ENCODE measurements at regions of chr10 and their contacts with region 1.

Region 1: DNA sequence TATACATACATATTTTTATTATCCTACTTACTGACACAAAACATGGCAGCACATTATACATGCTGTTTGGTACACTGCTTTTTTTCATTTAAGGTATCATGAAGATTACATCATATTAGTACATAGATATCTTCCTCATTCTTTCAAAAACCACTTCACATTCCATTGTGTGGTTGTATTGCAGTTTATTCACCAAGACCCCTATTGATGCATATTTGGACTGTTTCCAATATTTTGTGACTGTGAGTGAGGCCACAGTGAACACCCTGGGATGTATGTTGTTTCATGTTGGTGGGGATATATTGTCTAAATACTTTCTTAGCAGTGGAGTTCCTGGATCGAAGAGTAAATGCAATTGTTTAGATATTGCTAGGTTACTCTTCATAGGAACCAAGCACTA is 39.0 kb downstream of the TFAM start:
- DNase-seq: no peak
- ATAC-seq: no peak
- H3K4me3 ChIP-seq: no peak overlapping the region
- H3K27ac ChIP-seq: no peak overlapping the region
- H3K4me1 ChIP-seq: no peaks in the 10 kb centered on the region
- H3K27me3 ChIP-seq: no peaks in the 10 kb centered on the region
- CTCF ChIP-seq: no peak
- POLR2A ChIP-seq: no peak

Region 2: DNA sequence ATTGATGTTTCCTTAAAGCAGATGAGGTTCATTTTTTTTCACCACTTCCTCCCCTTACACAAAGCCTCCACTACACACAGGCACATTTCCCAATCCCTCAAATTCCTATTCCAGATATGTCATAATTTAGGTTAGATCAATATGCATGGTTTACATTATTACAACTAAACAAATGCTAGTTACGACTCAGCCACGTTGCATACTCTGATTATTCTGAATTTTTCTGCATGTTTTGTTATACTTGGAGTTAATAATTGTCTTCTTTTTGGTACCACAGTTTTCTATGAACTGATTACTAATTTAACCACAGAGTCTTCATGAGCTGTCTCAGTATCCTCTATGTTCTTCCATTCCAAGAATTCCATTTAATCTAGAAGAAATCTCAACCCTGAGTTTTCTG is 84.1 kb after region 1 on chr10:
- intact Hi-C with region 1: loop called in 1 of 10 experiments (anchors 10 kb)
- DNase-seq: no peak
- ATAC-seq: no peak
- H3K4me3 ChIP-seq: no peak overlapping the region
- H3K27ac ChIP-seq: no peak overlapping the region
- H3K4me1 ChIP-seq: peaks cover 0 to 5% (median 0%) of the 10 kb centered on the region in 12 donors
- H3K27me3 ChIP-seq: peaks cover 0 to 26% (median 0%) of the 10 kb centered on the region in 9 donors
- CTCF ChIP-seq: no peak
- POLR2A ChIP-seq: no peak

Region 3: GRCh38 chr10:58543141-58543540 is 119.0 kb after region 1 on chr10:
- intact Hi-C with region 1: no loop called
- DNase-seq: no peak
- ATAC-seq: no peak
- H3K4me3 ChIP-seq: no peak overlapping the region
- H3K27ac ChIP-seq: no peak overlapping the region
- H3K4me1 ChIP-seq: peaks cover 0 to 23% (median 0%) of the 10 kb centered on the region in 12 donors
- H3K27me3 ChIP-seq: no peaks in the 10 kb centered on the region
- CTCF ChIP-seq: no peak
- POLR2A ChIP-seq: no peak